Spleen (tissue), 13 donors: ENCODE measurements at regions of chr5 and their contacts with region 1.

Region 1: GRCh38 chr5:76953551-76954382 is 922 bp downstream of the CRHBP start:
- DNase-seq: peak; percentile 76
- H3K4me3 ChIP-seq: peak overlapping the region; percentile 38 to 74 (median 50)
- H3K27ac ChIP-seq: peak overlapping the region; percentile 35 to 83 (median 78)
- H3K4me1 ChIP-seq: peaks cover 5 to 43% (median 24%) of the 10 kb centered on the region in 6 donors
- H3K27me3 ChIP-seq: peaks cover 0 to 48% (median 23%) of the 10 kb centered on the region in 7 donors
- CTCF ChIP-seq: no peak
- POLR2A ChIP-seq: no peak

Region 2: GRCh38 chr5:76457674-76458485 is 495.9 kb before region 1 on chr5:
- intact Hi-C with region 1: no loop called
- DNase-seq: no peak
- H3K4me3 ChIP-seq: no peak overlapping the region
- H3K27ac ChIP-seq: no peak overlapping the region
- H3K4me1 ChIP-seq: peaks cover 0 to 25% (median 0%) of the 10 kb centered on the region in 6 donors
- H3K27me3 ChIP-seq: no peaks in the 10 kb centered on the region
- CTCF ChIP-seq: no peak
- POLR2A ChIP-seq: no peak

Region 3: DNA sequence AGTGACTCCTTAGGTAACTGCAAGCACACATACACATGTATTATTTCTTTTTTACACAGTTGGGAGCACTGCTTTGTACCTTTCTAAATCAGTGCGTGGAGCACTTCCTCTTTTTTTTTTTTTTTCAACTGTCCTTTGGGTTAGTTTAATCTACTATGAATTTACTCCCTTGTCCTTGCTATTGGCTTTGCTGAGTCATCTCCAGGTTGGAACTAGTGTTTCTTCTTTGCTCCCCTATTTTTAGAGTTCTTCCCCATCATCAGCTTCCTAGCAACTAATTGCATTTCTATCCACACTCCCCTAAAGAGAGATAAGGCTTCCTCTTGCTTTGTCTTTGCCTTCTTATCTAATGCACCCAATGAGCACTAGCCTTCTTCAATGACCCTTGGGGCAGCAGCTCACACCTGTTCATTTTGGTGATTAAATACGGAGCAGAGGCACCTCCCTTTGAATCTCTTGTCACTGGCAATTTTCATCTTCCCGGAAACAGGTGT is 79.6 kb before region 1 on chr5:
- intact Hi-C with region 1: loop called (anchors 2 kb)
- DNase-seq: no peak
- H3K4me3 ChIP-seq: peak overlapping the region in 2 of 8 donors; percentile 24 to 35
- H3K27ac ChIP-seq: peak overlapping the region in 1 of 8 donors; percentile 62
- H3K4me1 ChIP-seq: peaks cover 0 to 25% (median 17%) of the 10 kb centered on the region in 6 donors
- H3K27me3 ChIP-seq: no peaks in the 10 kb centered on the region
- CTCF ChIP-seq: no peak
- POLR2A ChIP-seq: no peak